ENCODE measurements at regions of chr6 and their contacts with region 1.

Region 1: DNA sequence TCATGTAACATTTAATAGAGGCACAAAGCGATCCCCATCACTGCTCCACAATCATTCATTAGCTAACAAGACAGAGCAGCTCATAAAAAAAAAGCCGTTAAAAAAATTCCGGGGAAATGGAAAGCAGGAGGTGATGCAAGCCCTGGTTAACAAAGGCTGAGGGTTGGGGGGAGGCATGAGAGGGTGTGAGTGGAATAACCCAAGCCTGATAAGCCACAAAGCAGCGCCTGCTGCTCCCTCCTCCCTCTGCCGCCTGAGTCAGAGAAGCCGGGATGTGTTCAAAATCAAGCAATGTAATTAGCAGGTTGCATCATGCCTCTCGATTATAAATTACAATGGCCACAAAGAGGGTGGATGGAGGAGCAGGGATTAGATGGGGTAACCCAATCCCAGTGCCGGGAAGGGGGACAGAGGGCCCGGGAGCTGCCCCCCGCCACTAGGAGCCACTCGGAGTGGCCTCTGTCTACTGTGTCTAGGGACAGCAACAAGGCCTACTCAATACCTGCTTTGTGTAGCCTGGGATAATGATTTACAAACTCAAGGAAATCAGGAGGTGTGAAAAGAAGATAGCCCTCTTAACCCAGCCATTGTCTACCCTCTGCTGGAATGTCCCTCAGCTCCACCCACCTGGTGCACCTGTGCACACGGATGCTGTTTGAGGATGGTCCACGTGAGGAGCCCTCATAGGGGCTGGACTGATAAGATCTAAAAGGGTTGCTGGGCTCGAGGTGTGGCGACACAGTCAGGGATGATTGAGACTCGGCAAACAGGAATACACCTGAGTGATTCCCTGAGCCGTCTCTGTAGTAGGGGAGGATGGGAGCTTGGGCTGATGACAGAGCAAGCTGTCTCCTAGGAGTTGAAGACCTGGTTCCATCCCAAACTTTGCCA is 156.9 kb downstream of the VEGFA start:
- DNase-seq: peak; percentile 97 to 99
- H3K4me3 ChIP-seq: no peak overlapping the region
- H3K4me3 Mint-ChIP-seq: peak overlapping the region; percentile 57
- H3K27ac Mint-ChIP-seq: peak overlapping the region; percentile 97
- H3K4me1 ChIP-seq: peaks cover 23% of the 10 kb centered on the region
- H3K4me1 Mint-ChIP-seq: peaks cover 6% of the 10 kb centered on the region
- H3K27me3 ChIP-seq: no peaks in the 10 kb centered on the region
- H3K27me3 Mint-ChIP-seq: no peaks in the 10 kb centered on the region
- CTCF ChIP-seq: peak in 1 of 2 experiments; percentile 18

Region 2: GRCh38 chr6:43803783-43804549 is 122.9 kb before region 1 on chr6:
- CTCF ChIA-PET with region 1: interaction called, 7 read pairs
- POLR2A ChIA-PET with region 1: interaction called, 8 read pairs
- intact Hi-C with region 1: loop called (anchors 1 kb)
- DNase-seq: peak; percentile 70 to 75
- H3K4me3 ChIP-seq: no peak overlapping the region
- H3K4me3 Mint-ChIP-seq: peak overlapping the region; percentile 59
- H3K27ac Mint-ChIP-seq: peak overlapping the region; percentile 93
- H3K4me1 ChIP-seq: peaks cover 94% of the 10 kb centered on the region
- H3K4me1 Mint-ChIP-seq: peaks cover 82% of the 10 kb centered on the region
- H3K27me3 ChIP-seq: no peaks in the 10 kb centered on the region
- H3K27me3 Mint-ChIP-seq: no peaks in the 10 kb centered on the region
- CTCF ChIP-seq: no peak

Region 3: GRCh38 chr6:43856005-43856765 is 70.7 kb before region 1 on chr6:
- CTCF ChIA-PET with region 1: interaction called, 13 read pairs
- POLR2A ChIA-PET with region 1: no interaction called
- intact Hi-C with region 1: loop called (anchors 1 kb)
- DNase-seq: peak; percentile 72 to 77
- H3K4me3 ChIP-seq: no peak overlapping the region
- H3K4me3 Mint-ChIP-seq: no peak overlapping the region
- H3K27ac Mint-ChIP-seq: peak overlapping the region; percentile 54
- H3K4me1 ChIP-seq: peaks cover 24% of the 10 kb centered on the region
- H3K4me1 Mint-ChIP-seq: peaks cover 14% of the 10 kb centered on the region
- H3K27me3 ChIP-seq: no peaks in the 10 kb centered on the region
- H3K27me3 Mint-ChIP-seq: no peaks in the 10 kb centered on the region
- CTCF ChIP-seq: peak; percentile 55 to 76

Region 4: DNA sequence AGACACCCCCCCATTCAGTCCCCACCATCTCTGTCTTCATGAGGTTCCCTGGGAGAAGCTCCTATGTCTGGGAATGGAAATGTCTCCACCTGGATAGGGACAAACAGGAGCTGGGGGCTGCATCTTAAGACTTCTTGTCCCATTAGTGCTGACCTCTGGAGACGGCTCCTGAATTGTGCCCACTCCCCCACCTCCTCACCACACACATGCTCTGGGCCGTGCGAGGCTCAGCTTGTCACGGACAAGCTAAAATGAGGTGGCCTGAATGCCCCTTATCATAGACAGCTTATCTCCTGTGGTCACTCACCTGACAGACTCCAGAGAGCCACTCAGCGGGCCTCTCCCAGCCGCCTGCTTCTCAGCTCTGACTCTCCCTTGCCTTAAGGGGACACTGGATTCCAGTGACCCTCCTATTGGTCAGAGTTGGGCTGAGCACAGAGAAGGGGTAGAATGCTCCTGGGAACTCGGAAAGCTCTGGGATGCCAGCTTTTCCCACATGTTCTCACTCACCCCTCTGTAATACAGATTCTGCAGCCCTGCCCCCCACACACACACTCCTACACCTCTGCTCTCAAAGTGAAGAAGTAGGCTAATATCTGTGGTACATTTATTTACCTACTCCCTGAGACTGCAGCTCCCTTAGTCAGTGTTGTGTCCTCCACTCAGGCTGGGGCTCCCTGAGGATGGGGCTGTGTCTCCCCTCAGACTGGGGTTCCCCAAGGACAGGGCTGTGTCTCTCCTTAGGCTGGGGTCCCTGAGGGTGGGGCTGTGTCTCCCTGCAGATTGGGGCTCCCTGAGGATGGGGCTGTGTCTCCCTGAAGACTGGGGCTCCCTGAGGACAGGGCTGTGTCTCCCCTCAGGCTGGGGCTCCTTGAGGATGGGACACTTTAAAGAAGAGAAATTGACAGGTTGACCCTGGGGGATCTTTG is 10.6 kb after region 1 on chr6:
- CTCF ChIA-PET with region 1: interaction called, 23 read pairs
- POLR2A ChIA-PET with region 1: interaction called, 18 read pairs
- intact Hi-C with region 1: no loop called
- DNase-seq: peak; percentile 54 to 74
- H3K4me3 ChIP-seq: no peak overlapping the region
- H3K4me3 Mint-ChIP-seq: no peak overlapping the region
- H3K27ac Mint-ChIP-seq: peak overlapping the region; percentile 61
- H3K4me1 ChIP-seq: peaks cover 33% of the 10 kb centered on the region
- H3K4me1 Mint-ChIP-seq: peaks cover 48% of the 10 kb centered on the region
- H3K27me3 ChIP-seq: no peaks in the 10 kb centered on the region
- H3K27me3 Mint-ChIP-seq: no peaks in the 10 kb centered on the region
- CTCF ChIP-seq: no peak

Region 5: GRCh38 chr6:43990627-43991619 is 64.0 kb after region 1 on chr6:
- CTCF ChIA-PET with region 1: interaction called, 10 read pairs
- POLR2A ChIA-PET with region 1: no interaction called
- intact Hi-C with region 1: no loop called
- DNase-seq: peak; percentile 67 to 81
- H3K4me3 ChIP-seq: no peak overlapping the region
- H3K4me3 Mint-ChIP-seq: no peak overlapping the region
- H3K27ac Mint-ChIP-seq: peak overlapping the region; percentile 75
- H3K4me1 ChIP-seq: peaks cover 30% of the 10 kb centered on the region
- H3K4me1 Mint-ChIP-seq: peaks cover 30% of the 10 kb centered on the region
- H3K27me3 ChIP-seq: no peaks in the 10 kb centered on the region
- H3K27me3 Mint-ChIP-seq: no peaks in the 10 kb centered on the region
- CTCF ChIP-seq: no peak

Region 6: DNA sequence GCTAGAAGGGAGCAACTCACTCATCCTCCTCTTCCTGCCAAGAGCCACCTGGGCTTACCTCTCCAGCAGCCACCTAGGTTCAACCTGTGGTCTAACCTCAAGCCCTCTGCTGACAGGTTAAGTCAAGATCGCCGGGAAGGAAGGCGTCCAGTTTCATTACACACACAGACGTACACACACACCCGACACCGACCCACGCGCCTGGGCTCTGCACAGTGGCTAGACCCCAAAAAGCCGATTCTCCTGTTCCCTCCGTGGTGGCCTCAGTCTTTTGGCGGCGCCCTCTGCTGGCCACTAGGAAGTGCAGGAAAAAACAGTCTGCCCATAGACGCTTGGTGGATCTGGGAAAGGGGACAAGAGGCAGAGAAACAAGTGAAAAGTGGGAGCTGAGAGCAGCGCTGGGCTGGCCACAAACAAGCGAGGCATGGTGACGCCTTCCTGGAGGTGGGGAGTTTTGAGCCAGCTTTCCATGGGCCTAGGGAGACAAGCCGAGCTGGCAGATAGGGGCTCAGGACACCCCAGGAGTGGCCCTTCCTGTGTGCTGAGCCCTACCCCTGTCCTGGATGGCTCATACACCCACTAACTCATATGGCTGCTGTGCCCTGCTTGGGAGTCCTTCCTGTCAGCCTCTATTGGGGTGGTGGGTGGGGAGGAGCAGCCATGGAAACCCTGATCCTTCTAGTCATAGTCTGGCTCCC is 147.7 kb after region 1 on chr6:
- CTCF ChIA-PET with region 1: interaction called, 18 read pairs
- POLR2A ChIA-PET with region 1: interaction called, 5 read pairs
- intact Hi-C with region 1: loop called (anchors 1 kb)
- DNase-seq: peak; percentile 64 to 65
- H3K4me3 ChIP-seq: no peak overlapping the region
- H3K4me3 Mint-ChIP-seq: peak overlapping the region; percentile 86
- H3K27ac Mint-ChIP-seq: peak overlapping the region; percentile 12
- H3K4me1 ChIP-seq: peaks cover 9% of the 10 kb centered on the region
- H3K4me1 Mint-ChIP-seq: peaks cover 7% of the 10 kb centered on the region
- H3K27me3 ChIP-seq: no peaks in the 10 kb centered on the region
- H3K27me3 Mint-ChIP-seq: peaks cover 4% of the 10 kb centered on the region
- CTCF ChIP-seq: peak; percentile 88 to 91

Measured in Caco-2 (cell line).